Sciatic nerve (tissue), 2 donors: ENCODE measurements at regions of chr10 and their contacts with region 1.

Region 1: GRCh38 chr10:124414076-124414475 is 4.6 kb downstream of the OAT start:
- DNase-seq: no peak
- ATAC-seq: no peak

Region 2: GRCh38 chr10:123772645-123773508 is 641.2 kb before region 1 on chr10:
- intact Hi-C with region 1: loop called (anchors 5 kb)
- DNase-seq: no peak
- ATAC-seq: no peak

Region 3: GRCh38 chr10:124470544-124471434 is 56.7 kb after region 1 on chr10:
- intact Hi-C with region 1: no loop called
- DNase-seq: no peak
- ATAC-seq: peak; percentile 19